GM12878 (cell line): ENCODE measurements at regions of chr2 and their contacts with region 1.

Region 1: DNA sequence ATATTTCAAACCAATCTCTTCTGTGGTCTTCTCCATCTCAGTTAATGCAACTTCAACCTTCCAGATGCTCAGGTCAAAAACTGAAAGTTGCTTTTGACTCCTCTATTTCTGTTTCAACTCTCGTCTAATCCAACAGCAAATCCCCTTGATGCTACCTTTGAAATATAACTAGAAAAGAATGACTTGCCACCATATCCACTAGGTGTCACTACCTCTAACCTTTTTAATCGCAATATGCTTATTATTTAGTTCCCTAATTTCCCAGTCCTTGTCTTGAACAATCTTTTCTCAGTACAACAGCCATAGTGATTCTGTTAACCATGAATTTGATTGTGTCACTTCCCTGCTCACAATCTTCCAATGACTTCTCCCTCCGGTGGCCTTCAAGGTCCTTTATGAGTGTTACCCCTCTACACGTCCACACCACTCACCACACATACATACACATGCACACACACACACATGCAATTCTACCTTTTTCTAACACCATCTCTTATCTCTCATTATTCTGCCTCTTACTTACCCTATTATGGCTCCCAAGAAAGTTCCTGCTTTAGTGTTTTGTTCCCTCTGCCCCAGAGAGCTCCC is 245.5 kb upstream of the KCNJ3 start:
- DNase-seq: peak; percentile 13
- ATAC-seq: peak; percentile 84
- H3K4me3 ChIP-seq: no peak overlapping the region
- H3K27ac ChIP-seq: no peak overlapping the region
- H3K4me1 ChIP-seq: no peaks in the 10 kb centered on the region
- H3K27me3 ChIP-seq: no peaks in the 10 kb centered on the region
- CTCF ChIP-seq: peak; percentile 30 to 56 (median 50); a peak in 5 of 6 replicates
- EP300 ChIP-seq: no peak
- POLR2A ChIP-seq: no peak
- RAD21 ChIP-seq: peak; percentile 38

Region 2: DNA sequence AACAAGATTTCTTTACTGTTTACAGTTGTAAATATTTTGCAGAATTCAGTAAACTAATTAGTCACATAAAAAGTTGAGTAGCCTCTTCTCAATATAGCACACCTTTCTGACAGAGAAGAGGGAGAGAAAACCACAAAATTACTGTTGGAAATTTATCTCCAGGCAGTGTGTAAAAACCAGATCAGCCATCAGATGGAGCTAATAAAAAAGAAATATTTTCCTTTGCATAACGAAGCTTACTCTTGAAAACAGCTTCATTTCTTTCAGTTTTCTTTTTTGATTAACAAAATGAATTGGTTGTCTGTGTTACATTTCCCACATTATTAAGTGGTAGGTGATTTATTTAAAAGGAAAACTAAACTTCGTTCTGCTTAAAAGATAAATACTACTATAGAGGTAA is 13.8 kb before region 1 on chr2:
- CTCF ChIA-PET with region 1: interaction called, 10 read pairs
- POLR2A ChIA-PET with region 1: no interaction called
- RAD21 ChIA-PET with region 1: interaction called, 4 read pairs
- SMC1A ChIA-PET with region 1: interaction called, 8 read pairs
- in situ Hi-C with region 1: no loop called
- intact Hi-C with region 1: no loop called
- DNase-seq: no peak
- ATAC-seq: no peak
- H3K4me3 ChIP-seq: no peak overlapping the region
- H3K27ac ChIP-seq: no peak overlapping the region
- H3K4me1 ChIP-seq: no peaks in the 10 kb centered on the region
- H3K27me3 ChIP-seq: no peaks in the 10 kb centered on the region
- CTCF ChIP-seq: peak in 1 of 3 experiments; percentile 35; a peak in 2 of 6 replicates
- EP300 ChIP-seq: no peak
- POLR2A ChIP-seq: no peak
- RAD21 ChIP-seq: no peak

Region 3: GRCh38 chr2:154527962-154528361 is 75.0 kb after region 1 on chr2:
- CTCF ChIA-PET with region 1: interaction called, 3 read pairs
- POLR2A ChIA-PET with region 1: no interaction called
- RAD21 ChIA-PET with region 1: no interaction called
- SMC1A ChIA-PET with region 1: interaction called, 6 read pairs
- in situ Hi-C with region 1: no loop called
- intact Hi-C with region 1: loop called (anchors 5 kb)
- DNase-seq: peak; percentile 15
- ATAC-seq: peak; percentile 61
- H3K4me3 ChIP-seq: no peak overlapping the region
- H3K27ac ChIP-seq: no peak overlapping the region
- H3K4me1 ChIP-seq: no peaks in the 10 kb centered on the region
- H3K27me3 ChIP-seq: no peaks in the 10 kb centered on the region
- CTCF ChIP-seq: no peak
- EP300 ChIP-seq: no peak
- POLR2A ChIP-seq: no peak
- RAD21 ChIP-seq: no peak

Region 4: DNA sequence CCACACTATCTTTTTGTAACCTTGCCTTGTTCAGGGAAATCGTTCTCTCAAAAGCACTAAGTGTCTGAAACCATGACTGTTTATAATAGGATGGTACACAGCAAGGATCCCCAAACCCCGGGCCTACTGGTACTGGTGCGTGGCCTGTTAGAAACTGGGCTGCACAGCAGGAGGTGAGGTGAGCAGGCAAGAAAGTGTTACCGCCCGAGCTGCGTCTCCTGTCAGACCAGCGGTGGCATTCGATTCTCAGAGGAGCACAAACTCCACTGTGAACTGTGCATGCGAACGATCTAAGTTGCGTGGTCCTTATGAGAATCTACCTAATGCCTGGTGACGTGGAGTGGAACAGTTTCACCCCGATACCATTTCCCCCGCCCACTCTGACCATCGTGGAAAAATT is 163.7 kb after region 1 on chr2:
- CTCF ChIA-PET with region 1: interaction called, 5 read pairs
- POLR2A ChIA-PET with region 1: no interaction called
- RAD21 ChIA-PET with region 1: no interaction called
- SMC1A ChIA-PET with region 1: interaction called, 5 read pairs
- in situ Hi-C with region 1: no loop called
- intact Hi-C with region 1: loop called (anchors 5 kb)
- DNase-seq: no peak
- ATAC-seq: no peak
- H3K4me3 ChIP-seq: no peak overlapping the region
- H3K27ac ChIP-seq: no peak overlapping the region
- H3K4me1 ChIP-seq: no peaks in the 10 kb centered on the region
- H3K27me3 ChIP-seq: no peaks in the 10 kb centered on the region
- CTCF ChIP-seq: no peak
- EP300 ChIP-seq: no peak
- POLR2A ChIP-seq: no peak
- RAD21 ChIP-seq: no peak

Region 5: DNA sequence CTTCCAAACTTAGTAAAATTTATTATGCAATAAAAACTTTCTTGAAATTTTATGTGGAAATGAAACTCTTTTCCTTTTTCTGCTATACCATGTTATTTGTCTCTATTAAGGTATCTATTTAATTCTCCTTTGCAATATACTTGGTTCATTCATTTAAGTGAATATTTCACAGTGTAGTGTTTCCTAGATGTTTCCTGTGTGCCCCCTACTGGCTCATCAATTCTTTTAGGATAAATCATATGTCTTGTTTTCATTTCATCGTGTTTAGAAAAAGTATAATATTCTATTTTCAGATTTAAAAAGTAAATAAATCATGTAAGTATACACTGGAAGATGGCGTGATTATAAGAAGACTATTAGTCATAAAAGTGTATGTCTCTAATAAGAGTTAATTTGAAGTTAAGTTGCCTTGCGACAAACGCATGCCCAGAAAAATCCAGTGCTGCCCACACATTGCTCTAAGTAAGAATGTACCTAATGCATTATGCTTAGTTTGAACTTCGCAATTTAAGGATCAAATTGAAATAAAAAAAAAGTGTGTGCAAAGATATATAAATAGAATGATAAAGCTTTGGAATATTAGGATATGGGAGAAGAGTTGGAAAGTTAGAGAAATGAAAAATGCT is 770.9 kb after region 1 on chr2:
- CTCF ChIA-PET with region 1: interaction called, 14 read pairs
- POLR2A ChIA-PET with region 1: no interaction called
- RAD21 ChIA-PET with region 1: interaction called, 4 read pairs
- SMC1A ChIA-PET with region 1: interaction called, 3 read pairs
- in situ Hi-C with region 1: loop called (anchors 25 kb)
- intact Hi-C with region 1: loop called (anchors 5 kb)
- DNase-seq: no peak
- ATAC-seq: peak; percentile 80
- H3K4me3 ChIP-seq: no peak overlapping the region
- H3K27ac ChIP-seq: no peak overlapping the region
- H3K4me1 ChIP-seq: peaks cover 1% of the 10 kb centered on the region; the same call in 1 of the 2 replicates
- H3K27me3 ChIP-seq: no peaks in the 10 kb centered on the region
- CTCF ChIP-seq: peak; percentile 33 to 61 (median 52); a peak in 5 of 6 replicates
- EP300 ChIP-seq: no peak
- POLR2A ChIP-seq: no peak
- RAD21 ChIP-seq: peak; percentile 87

Region 6: DNA sequence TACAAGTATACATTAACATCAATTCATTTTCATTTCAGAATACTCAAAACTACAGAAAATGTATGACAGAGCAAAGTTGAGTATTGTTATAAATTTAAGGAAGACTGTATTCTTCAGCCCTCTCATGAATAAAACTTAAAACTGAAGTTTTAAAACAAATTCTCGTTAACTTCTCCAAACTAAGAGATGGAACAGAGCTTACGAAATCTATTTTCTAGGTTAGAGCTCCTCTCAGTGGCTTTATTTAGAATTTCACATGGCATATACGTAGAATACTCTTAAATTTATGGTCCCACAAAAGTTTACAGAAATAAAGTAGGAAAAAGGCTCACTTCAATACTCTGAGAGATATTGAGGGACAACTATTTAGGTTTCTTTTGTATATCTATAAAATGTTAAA is 857.6 kb after region 1 on chr2:
- CTCF ChIA-PET with region 1: interaction called, 5 read pairs
- POLR2A ChIA-PET with region 1: no interaction called
- RAD21 ChIA-PET with region 1: interaction called, 4 read pairs
- SMC1A ChIA-PET with region 1: interaction called, 3 read pairs
- in situ Hi-C with region 1: no loop called
- intact Hi-C with region 1: loop called (anchors 2 kb)
- DNase-seq: no peak
- ATAC-seq: peak; percentile 67
- H3K4me3 ChIP-seq: no peak overlapping the region
- H3K27ac ChIP-seq: no peak overlapping the region
- H3K4me1 ChIP-seq: no peaks in the 10 kb centered on the region
- H3K27me3 ChIP-seq: no peaks in the 10 kb centered on the region
- CTCF ChIP-seq: peak; percentile 26 to 62 (median 48); a peak in 5 of 6 replicates
- EP300 ChIP-seq: no peak
- POLR2A ChIP-seq: no peak
- RAD21 ChIP-seq: peak; percentile 83